ENCODE measurements at regions of chr1 and their contacts with region 1.

Region 1: GRCh38 chr1:160261893-160262794 is at the start of gene DCAF8:
- DNase-seq: peak; percentile 96 to 99 (median 98)
- ATAC-seq: peak; percentile 86
- H3K4me3 ChIP-seq: peak within 1 kb of the TSS; percentile 83
- H3K4me3 Mint-ChIP-seq: peak within 1 kb of the TSS; percentile 96
- H3K27ac ChIP-seq: peak within 1 kb of the TSS; percentile 98 to 99
- H3K27ac Mint-ChIP-seq: peak within 1 kb of the TSS; percentile 97
- H3K4me1 ChIP-seq: peaks cover 33% of the 10 kb centered on the region
- H3K4me1 Mint-ChIP-seq: peaks cover 55% of the 10 kb centered on the region
- H3K27me3 ChIP-seq: no peaks in the 10 kb centered on the region
- H3K27me3 Mint-ChIP-seq: no peaks in the 10 kb centered on the region
- CTCF ChIP-seq: no peak
- total RNA-seq, gene DCAF8: 151 to 154 TPM

Region 2: GRCh38 chr1:160227034-160227433 is 35.1 kb before region 1 on chr1:
- CTCF ChIA-PET with region 1: no interaction called
- POLR2A ChIA-PET with region 1: interaction called, 10 read pairs
- intact Hi-C with region 1: no loop called
- DNase-seq: no peak
- ATAC-seq: no peak
- H3K4me3 ChIP-seq: no peak overlapping the region
- H3K4me3 Mint-ChIP-seq: no peak overlapping the region
- H3K27ac ChIP-seq: no peak overlapping the region
- H3K27ac Mint-ChIP-seq: no peak overlapping the region
- H3K4me1 ChIP-seq: no peaks in the 10 kb centered on the region
- H3K4me1 Mint-ChIP-seq: no peaks in the 10 kb centered on the region
- H3K27me3 ChIP-seq: no peaks in the 10 kb centered on the region
- H3K27me3 Mint-ChIP-seq: no peaks in the 10 kb centered on the region
- CTCF ChIP-seq: no peak

Region 3: DNA sequence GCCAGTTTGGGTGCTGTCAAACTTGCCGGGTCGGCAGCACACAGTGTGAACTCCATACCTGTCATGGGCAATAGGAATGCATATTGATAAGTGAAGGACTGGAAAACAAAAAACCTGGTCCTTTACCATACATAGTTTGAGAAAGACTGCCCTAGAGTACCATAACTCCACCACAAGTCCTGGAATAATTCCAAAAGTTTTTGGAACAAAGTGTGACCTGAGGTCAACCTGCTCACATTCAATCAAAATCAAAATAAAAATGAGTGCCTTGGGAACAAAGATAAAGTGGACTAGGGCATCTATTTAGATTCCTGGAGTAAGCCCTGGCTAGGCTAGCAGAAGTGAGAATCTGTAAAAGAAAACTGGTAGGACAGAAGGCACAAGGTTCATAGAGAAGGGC is 15.2 kb after region 1 on chr1:
- CTCF ChIA-PET with region 1: interaction called, 3 read pairs
- POLR2A ChIA-PET with region 1: interaction called, 19 read pairs
- intact Hi-C with region 1: loop called in 1 of 2 experiments (anchors 1 kb)
- DNase-seq: no peak
- ATAC-seq: no peak
- H3K4me3 ChIP-seq: no peak overlapping the region
- H3K4me3 Mint-ChIP-seq: no peak overlapping the region
- H3K27ac ChIP-seq: no peak overlapping the region
- H3K27ac Mint-ChIP-seq: no peak overlapping the region
- H3K4me1 ChIP-seq: no peaks in the 10 kb centered on the region
- H3K4me1 Mint-ChIP-seq: peaks cover under 1% of the 10 kb centered on the region
- H3K27me3 ChIP-seq: no peaks in the 10 kb centered on the region
- H3K27me3 Mint-ChIP-seq: no peaks in the 10 kb centered on the region
- CTCF ChIP-seq: no peak

Region 4: GRCh38 chr1:160284782-160285344 is 22.7 kb after region 1 on chr1 and contains the start of gene PEX19:
- CTCF ChIA-PET with region 1: interaction called, 8 read pairs
- POLR2A ChIA-PET with region 1: interaction called, 73 read pairs
- intact Hi-C with region 1: loop called (anchors 1 kb)
- DNase-seq: peak; percentile 90 to 96 (median 92)
- ATAC-seq: peak; percentile 100
- H3K4me3 ChIP-seq: peak within 1 kb of the TSS; percentile 94
- H3K4me3 Mint-ChIP-seq: peak within 1 kb of the TSS; percentile 99
- H3K27ac ChIP-seq: peak within 1 kb of the TSS; percentile 37 to 60
- H3K27ac Mint-ChIP-seq: peak within 1 kb of the TSS; percentile 87
- H3K4me1 ChIP-seq: peaks cover 23% of the 10 kb centered on the region
- H3K4me1 Mint-ChIP-seq: peaks cover 35% of the 10 kb centered on the region
- H3K27me3 ChIP-seq: no peaks in the 10 kb centered on the region
- H3K27me3 Mint-ChIP-seq: no peaks in the 10 kb centered on the region
- CTCF ChIP-seq: no peak
- total RNA-seq, gene PEX19: 32.0 to 33.4 TPM

Region 5: GRCh38 chr1:160291248-160292220 is 29.4 kb after region 1 on chr1:
- CTCF ChIA-PET with region 1: interaction called, 28 read pairs
- POLR2A ChIA-PET with region 1: interaction called, 23 read pairs
- intact Hi-C with region 1: no loop called
- DNase-seq: peak; percentile 48 to 88 (median 58)
- ATAC-seq: peak; percentile 99
- H3K4me3 ChIP-seq: no peak overlapping the region
- H3K4me3 Mint-ChIP-seq: peak overlapping the region; percentile 5
- H3K27ac ChIP-seq: no peak overlapping the region
- H3K27ac Mint-ChIP-seq: peak overlapping the region; percentile 16
- H3K4me1 ChIP-seq: peaks cover 6% of the 10 kb centered on the region
- H3K4me1 Mint-ChIP-seq: peaks cover 7% of the 10 kb centered on the region
- H3K27me3 ChIP-seq: no peaks in the 10 kb centered on the region
- H3K27me3 Mint-ChIP-seq: no peaks in the 10 kb centered on the region
- CTCF ChIP-seq: peak; percentile 78

Region 6: GRCh38 chr1:160342953-160343869 is 81.1 kb after region 1 on chr1 and contains the starts of genes COPA and NCSTN:
- CTCF ChIA-PET with region 1: no interaction called
- POLR2A ChIA-PET with region 1: interaction called, 3 read pairs
- intact Hi-C with region 1: loop called in 1 of 2 experiments (anchors 5 kb)
- DNase-seq: peak; percentile 79 to 96 (median 84)
- ATAC-seq: peak; percentile 98
- H3K4me3 ChIP-seq: peak within 1 kb of the TSS; percentile 96
- H3K4me3 Mint-ChIP-seq: peak within 1 kb of the TSS; percentile 100
- H3K27ac ChIP-seq: peak within 1 kb of the TSS; percentile 88 to 94
- H3K27ac Mint-ChIP-seq: peak within 1 kb of the TSS; percentile 97
- H3K4me1 ChIP-seq: peaks cover 18% of the 10 kb centered on the region
- H3K4me1 Mint-ChIP-seq: peaks cover 69% of the 10 kb centered on the region
- H3K27me3 ChIP-seq: no peaks in the 10 kb centered on the region
- H3K27me3 Mint-ChIP-seq: no peaks in the 10 kb centered on the region
- CTCF ChIP-seq: no peak
- total RNA-seq, gene COPA: 95.0 to 107 TPM
- total RNA-seq, gene NCSTN: 54.9 to 56.6 TPM

Region 7: DNA sequence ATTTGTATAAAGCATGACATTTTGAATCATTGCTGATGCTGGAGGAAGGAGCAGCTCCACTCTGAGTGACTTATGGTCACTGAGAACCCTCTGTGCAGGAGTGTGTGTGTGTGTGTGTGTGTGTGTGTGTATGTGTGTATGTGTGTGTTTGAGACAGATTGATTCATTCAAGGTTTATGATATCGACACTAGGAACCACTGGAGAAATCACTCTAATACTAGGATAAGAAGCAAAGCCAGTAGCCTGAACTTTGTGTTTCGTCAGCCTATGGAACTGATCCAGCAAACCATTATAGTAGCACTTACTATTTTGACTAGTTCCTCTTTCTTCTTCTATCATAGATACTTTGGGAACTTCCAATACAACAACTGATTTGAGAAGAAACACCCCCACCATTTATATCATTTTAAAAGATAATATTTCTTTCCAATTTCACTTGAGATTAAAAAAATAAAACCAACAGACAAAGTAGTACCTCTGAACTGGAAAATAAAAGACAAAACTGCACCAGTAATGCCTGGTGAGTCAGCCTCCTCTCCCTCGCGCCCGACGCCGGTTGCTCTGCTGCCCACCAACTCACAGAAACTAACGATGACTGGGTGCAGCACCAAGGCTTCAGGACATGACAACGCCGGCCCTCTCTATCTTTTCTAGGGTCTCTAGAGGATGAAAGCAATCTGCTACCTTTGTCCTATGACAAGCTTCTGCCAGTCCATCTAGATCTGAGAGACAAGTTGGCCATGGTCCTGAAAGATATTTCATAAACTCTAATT is 363.8 kb after region 1 on chr1:
- CTCF ChIA-PET with region 1: no interaction called
- POLR2A ChIA-PET with region 1: no interaction called
- intact Hi-C with region 1: no loop called
- DNase-seq: peak in 10 of 14 experiments; percentile 19 to 75 (median 49)
- ATAC-seq: no peak
- H3K4me3 ChIP-seq: no peak overlapping the region
- H3K4me3 Mint-ChIP-seq: peak overlapping the region; percentile 54
- H3K27ac ChIP-seq: peak overlapping the region; percentile 19 to 44
- H3K27ac Mint-ChIP-seq: peak overlapping the region; percentile 97
- H3K4me1 ChIP-seq: peaks cover 91% of the 10 kb centered on the region
- H3K4me1 Mint-ChIP-seq: peaks cover 100% of the 10 kb centered on the region
- H3K27me3 ChIP-seq: no peaks in the 10 kb centered on the region
- H3K27me3 Mint-ChIP-seq: no peaks in the 10 kb centered on the region
- CTCF ChIP-seq: no peak